Panc1 (cell line): ENCODE measurements at regions of chr7 and their contacts with region 1.

Region 1: DNA sequence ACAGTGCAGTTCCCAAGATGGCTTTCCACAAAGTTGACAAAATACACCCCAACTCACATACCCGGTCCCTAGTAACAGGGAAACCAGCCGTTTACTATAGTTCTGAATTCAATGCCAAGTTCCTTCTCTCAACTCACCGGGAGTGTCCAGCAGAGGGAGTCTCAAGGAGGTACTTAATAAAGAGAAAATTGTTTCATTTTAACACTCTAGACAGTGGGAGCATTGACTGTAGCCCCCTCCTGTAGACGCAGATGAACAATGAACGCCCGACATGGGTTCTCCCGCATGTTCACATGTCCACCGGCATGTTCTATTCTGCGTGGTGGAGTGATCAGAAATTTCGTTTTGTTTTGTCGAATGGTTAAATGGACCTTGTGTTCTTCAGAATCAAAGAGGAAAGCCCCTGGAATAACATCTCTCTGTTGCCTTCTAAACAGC is 1.9 kb downstream of the HIPK2 start:
- DNase-seq: peak; percentile 75
- ATAC-seq: peak; percentile 64
- H3K4me3 ChIP-seq: peak overlapping the region; percentile 93 to 95
- H3K27ac ChIP-seq: peak overlapping the region; percentile 95
- H3K4me1 ChIP-seq: peaks cover 28% of the 10 kb centered on the region
- H3K27me3 ChIP-seq: no peaks in the 10 kb centered on the region; the same call in 1 of the 2 replicates
- CTCF ChIP-seq: peak; percentile 87

Region 2: GRCh38 chr7:140003913-140004382 is 228.1 kb after region 1 on chr7:
- CTCF ChIA-PET with region 1: no interaction called
- POLR2A ChIA-PET with region 1: no interaction called
- in situ Hi-C with region 1: no loop called
- intact Hi-C with region 1: loop called (anchors 1 kb)
- DNase-seq: peak; percentile 35
- ATAC-seq: peak; percentile 50; the same call in 1 of the 2 replicates
- H3K4me3 ChIP-seq: no peak overlapping the region
- H3K27ac ChIP-seq: no peak overlapping the region
- H3K4me1 ChIP-seq: peaks cover 4% of the 10 kb centered on the region; the same call in 1 of the 2 replicates
- H3K27me3 ChIP-seq: no peaks in the 10 kb centered on the region
- CTCF ChIP-seq: peak; percentile 82